ENCODE measurements at regions of chr18 and their contacts with region 1.

Region 1: DNA sequence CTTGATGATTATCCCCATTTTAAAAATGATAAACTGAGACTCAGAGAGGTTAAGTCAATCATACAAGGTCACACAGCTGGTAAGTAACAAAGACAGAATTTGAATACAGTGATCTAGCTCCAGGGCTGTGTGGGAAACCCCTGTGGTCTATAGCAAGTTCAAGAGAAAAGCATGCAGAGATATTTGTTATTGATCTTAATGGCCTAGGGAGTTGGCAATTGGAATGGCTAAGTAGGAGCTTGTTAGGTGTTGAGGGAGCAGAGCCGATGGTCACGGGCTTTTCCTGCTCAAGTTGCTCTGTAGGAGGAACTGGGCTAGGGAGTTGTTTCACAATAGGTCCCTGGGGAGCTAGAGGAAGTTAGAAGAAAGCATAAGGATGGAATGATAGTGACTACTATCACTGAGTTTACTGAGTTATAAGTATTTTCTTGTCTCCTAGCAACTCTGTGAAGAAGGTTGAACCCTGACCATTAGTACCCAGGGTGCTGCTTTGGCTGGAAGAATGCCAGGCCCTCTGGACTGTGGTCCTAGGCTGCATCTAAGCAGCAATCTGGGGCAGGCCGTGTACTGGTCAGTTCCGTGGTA is 30.0 kb downstream of the RNF125 start:
- DNase-seq: no peak
- H3K4me3 ChIP-seq: no peak overlapping the region
- H3K27ac ChIP-seq: no peak overlapping the region
- H3K4me1 ChIP-seq: peaks cover 3% of the 10 kb centered on the region
- H3K27me3 ChIP-seq: no peaks in the 10 kb centered on the region
- CTCF ChIP-seq: no peak

Region 2: GRCh38 chr18:32086861-32087260 is 38.3 kb after region 1 on chr18:
- CTCF ChIA-PET with region 1: interaction called, 13 read pairs
- dilution Hi-C with region 1: no loop called
- in situ Hi-C with region 1: no loop called
- intact Hi-C with region 1: no loop called
- DNase-seq: peak; percentile 79
- H3K4me3 ChIP-seq: no peak overlapping the region
- H3K27ac ChIP-seq: no peak overlapping the region
- H3K4me1 ChIP-seq: peaks cover 13% of the 10 kb centered on the region
- H3K27me3 ChIP-seq: no peaks in the 10 kb centered on the region
- CTCF ChIP-seq: no peak

Region 3: DNA sequence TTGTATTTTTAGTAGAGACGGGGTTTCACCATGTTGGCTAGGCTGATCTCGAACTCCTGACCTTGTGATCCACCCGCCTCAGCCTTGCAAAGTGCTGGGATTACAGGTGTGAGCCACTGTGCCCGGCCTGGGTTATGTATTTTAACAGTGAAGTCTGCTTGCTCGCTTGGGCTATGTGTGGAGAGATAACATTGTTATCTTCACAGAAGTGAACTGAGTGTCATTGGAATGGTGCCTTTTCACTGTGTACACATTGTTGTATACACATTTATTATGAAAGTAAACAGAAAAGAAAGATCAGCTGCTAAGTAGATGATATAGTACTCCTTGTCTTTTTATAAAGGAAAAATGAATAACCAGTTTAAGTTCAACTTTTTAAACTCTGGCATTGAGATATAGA is 73.4 kb after region 1 on chr18:
- CTCF ChIA-PET with region 1: no interaction called
- dilution Hi-C with region 1: no loop called
- in situ Hi-C with region 1: no loop called
- intact Hi-C with region 1: no loop called
- DNase-seq: no peak
- H3K4me3 ChIP-seq: no peak overlapping the region
- H3K27ac ChIP-seq: no peak overlapping the region
- H3K4me1 ChIP-seq: no peaks in the 10 kb centered on the region
- H3K27me3 ChIP-seq: no peaks in the 10 kb centered on the region
- CTCF ChIP-seq: no peak